K562 (cell line): ENCODE measurements at regions of chr2 and their contacts with region 1.

Region 1: GRCh38 chr2:37168217-37168981 is 11.6 kb upstream of the EIF2AK2 start:
- DNase-seq: peak; percentile 61 to 74 (median 64)
- ATAC-seq: peak; percentile 99
- H3K4me3 ChIP-seq: no peak overlapping the region
- H3K27ac ChIP-seq: no peak overlapping the region
- H3K4me1 ChIP-seq: no peaks in the 10 kb centered on the region
- H3K27me3 ChIP-seq: no peaks in the 10 kb centered on the region
- CTCF ChIP-seq: peak; percentile 52 to 80 (median 77)
- EP300 ChIP-seq: no peak
- POLR2A ChIP-seq: no peak
- RAD21 ChIP-seq: peak; percentile 13 to 69; a peak in 2 of 4 replicates

Region 2: GRCh38 chr2:37283207-37283606 is 114.8 kb after region 1 on chr2:
- CTCF ChIA-PET with region 1: no interaction called
- POLR2A ChIA-PET with region 1: no interaction called
- in situ Hi-C with region 1: no loop called
- intact Hi-C with region 1: loop called (anchors 5 kb)
- DNase-seq: no peak
- ATAC-seq: no peak
- H3K4me3 ChIP-seq: no peak overlapping the region
- H3K27ac ChIP-seq: no peak overlapping the region
- H3K4me1 ChIP-seq: no peaks in the 10 kb centered on the region
- H3K27me3 ChIP-seq: no peaks in the 10 kb centered on the region
- CTCF ChIP-seq: no peak
- EP300 ChIP-seq: no peak
- POLR2A ChIP-seq: no peak
- RAD21 ChIP-seq: no peak